Right lobe of liver (tissue), 6 donors: ENCODE measurements at regions of chr19 and their contacts with region 1.

Region 1: GRCh38 chr19:18007044-18007916 is 690 bp upstream of the ARRDC2 start:
- DNase-seq: peak; percentile 87 to 89 (median 88)
- ATAC-seq: peak; percentile 73 to 87 (median 82)
- H3K4me3 ChIP-seq: peak overlapping the region; percentile 53 to 72 (median 60)
- H3K27ac ChIP-seq: peak overlapping the region; percentile 77 to 94 (median 90)
- H3K4me1 ChIP-seq: peaks cover 0 to 14% (median 2%) of the 10 kb centered on the region in 4 donors
- H3K27me3 ChIP-seq: no peaks in the 10 kb centered on the region
- CTCF ChIP-seq: peak; percentile 98 to 99 (median 99)
- POLR2A ChIP-seq: peak; percentile 13

Region 2: GRCh38 chr19:17963937-17964691 is 43.2 kb before region 1 on chr19:
- intact Hi-C with region 1: no loop called
- DNase-seq: no peak
- ATAC-seq: no peak
- H3K4me3 ChIP-seq: no peak overlapping the region
- H3K27ac ChIP-seq: no peak overlapping the region
- H3K4me1 ChIP-seq: no peaks in the 10 kb centered on the region
- H3K27me3 ChIP-seq: peaks cover 0 to 6% of the 10 kb centered on the region in 2 donors
- CTCF ChIP-seq: no peak
- POLR2A ChIP-seq: no peak

Region 3: DNA sequence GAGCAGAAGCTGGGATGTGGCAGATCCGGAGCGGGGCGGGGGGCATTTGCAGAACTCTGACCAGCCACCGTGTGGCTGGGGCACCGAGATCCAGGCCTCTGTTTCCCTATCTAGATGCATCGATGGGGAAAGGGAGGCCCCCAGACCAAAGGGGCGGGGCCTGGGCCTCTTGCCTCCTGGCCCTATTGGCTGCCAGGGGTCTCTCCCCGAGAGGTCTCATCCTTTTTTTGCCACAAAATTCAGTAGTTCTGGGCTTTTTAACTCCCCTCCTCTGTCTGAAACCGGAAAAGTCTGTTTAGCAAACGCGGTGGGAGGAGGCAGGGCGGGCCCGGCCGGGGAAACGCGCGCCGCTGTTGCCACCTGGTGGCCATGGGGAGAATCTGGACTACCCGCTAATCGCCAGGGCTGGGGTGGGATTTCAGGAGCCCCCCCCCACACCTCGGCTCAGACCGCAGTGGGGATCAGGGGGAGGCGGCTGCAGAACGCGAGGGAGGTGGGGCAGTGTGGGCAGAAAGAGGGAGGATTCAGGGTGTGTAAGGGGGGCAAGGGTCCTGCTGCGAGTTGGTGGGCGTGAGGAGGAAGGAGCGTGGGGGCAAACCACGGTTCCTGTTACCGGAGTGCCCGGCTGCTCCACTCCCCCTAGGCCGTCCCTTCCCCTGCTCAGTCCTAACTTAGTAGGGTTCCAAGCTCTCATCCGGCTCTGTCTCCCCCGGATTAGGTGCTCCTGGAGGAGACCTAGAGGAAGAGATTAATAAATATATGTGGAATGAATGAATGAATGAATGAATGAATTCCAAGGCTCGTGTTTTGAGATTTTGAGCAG is 51.1 kb after region 1 on chr19:
- intact Hi-C with region 1: loop called (anchors 2 to 5 kb)
- DNase-seq: peak; percentile 81 to 85 (median 84)
- ATAC-seq: peak; percentile 86 to 96 (median 88)
- H3K4me3 ChIP-seq: peak overlapping the region in 2 of 3 donors; percentile 16 to 26
- H3K27ac ChIP-seq: peak overlapping the region; percentile 69 to 87 (median 70)
- H3K4me1 ChIP-seq: peaks cover 0 to 11% (median 4%) of the 10 kb centered on the region in 4 donors
- H3K27me3 ChIP-seq: no peaks in the 10 kb centered on the region
- CTCF ChIP-seq: peak; percentile 91 to 97 (median 92)
- POLR2A ChIP-seq: no peak

Region 4: DNA sequence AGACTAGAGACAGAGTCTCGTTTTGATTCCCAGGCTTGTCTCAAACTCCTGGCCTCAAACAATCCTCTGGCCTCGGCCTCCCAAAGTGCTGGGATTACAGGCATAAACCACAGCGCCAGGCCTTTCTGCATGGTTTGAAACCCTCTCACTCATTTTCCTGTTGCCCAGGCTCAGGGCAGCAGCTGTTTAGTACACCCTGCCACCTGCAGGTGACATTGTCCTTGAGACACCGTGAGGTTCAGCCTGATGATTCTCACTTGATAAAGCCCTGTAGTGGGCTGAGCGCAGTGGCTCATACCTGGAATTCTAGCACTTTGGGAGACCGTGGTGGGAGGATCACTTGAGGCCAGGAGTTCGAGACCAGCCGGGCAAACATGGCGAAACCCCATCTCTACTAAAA is 66.9 kb after region 1 on chr19:
- intact Hi-C with region 1: no loop called
- DNase-seq: no peak
- ATAC-seq: peak in 2 of 4 donors; percentile 25 to 58
- H3K4me3 ChIP-seq: no peak overlapping the region
- H3K27ac ChIP-seq: no peak overlapping the region
- H3K4me1 ChIP-seq: no peaks in the 10 kb centered on the region
- H3K27me3 ChIP-seq: no peaks in the 10 kb centered on the region
- CTCF ChIP-seq: peak in 1 of 4 donors; percentile 11
- POLR2A ChIP-seq: no peak